WTC11 (cell line): ENCODE measurements at regions of chr3 and their contacts with region 1.

Region 1: GRCh38 chr3:160464321-160464720 is 14.7 kb upstream of the TRIM59 start:
- DNase-seq: no peak
- ATAC-seq: no peak
- H3K4me3 Mint-ChIP-seq: no peak overlapping the region
- H3K27ac Mint-ChIP-seq: no peak overlapping the region
- H3K4me1 Mint-ChIP-seq: peaks cover 5% of the 10 kb centered on the region; the same call in 1 of the 2 replicates
- H3K27me3 Mint-ChIP-seq: peaks cover 36% of the 10 kb centered on the region
- CTCF ChIP-seq: no peak

Region 2: DNA sequence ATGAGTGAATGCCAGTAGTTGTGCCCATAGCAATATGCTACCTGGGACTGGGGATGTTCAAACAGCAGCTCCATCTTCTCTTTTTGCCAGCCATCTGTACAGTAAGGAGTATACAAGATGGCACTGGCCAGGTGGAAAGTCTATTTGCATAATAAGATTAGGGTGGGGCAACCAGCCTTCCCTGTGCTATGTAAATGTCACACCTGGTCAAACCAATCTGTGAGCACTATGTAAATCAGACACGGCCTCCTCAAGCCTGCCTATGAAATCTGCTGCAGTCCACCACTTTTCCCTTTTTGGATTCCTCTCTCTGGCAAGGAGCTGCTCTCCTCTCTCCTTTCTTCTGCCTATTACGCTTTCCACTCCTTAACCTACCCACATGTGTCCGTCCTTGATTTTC is 186.1 kb before region 1 on chr3:
- CTCF ChIA-PET with region 1: no interaction called
- POLR2A ChIA-PET with region 1: no interaction called
- DNase-seq: no peak
- ATAC-seq: peak; percentile 20
- H3K4me3 Mint-ChIP-seq: no peak overlapping the region
- H3K27ac Mint-ChIP-seq: no peak overlapping the region
- H3K4me1 Mint-ChIP-seq: peaks cover 23% of the 10 kb centered on the region
- H3K27me3 Mint-ChIP-seq: no peaks in the 10 kb centered on the region
- CTCF ChIP-seq: no peak

Region 3: GRCh38 chr3:160486459-160486869 is 22.1 kb after region 1 on chr3:
- CTCF ChIA-PET with region 1: interaction called, 4 read pairs
- POLR2A ChIA-PET with region 1: interaction called, 11 read pairs
- DNase-seq: no peak
- ATAC-seq: no peak
- H3K4me3 Mint-ChIP-seq: no peak overlapping the region
- H3K27ac Mint-ChIP-seq: no peak overlapping the region
- H3K4me1 Mint-ChIP-seq: 0 out of 2 replicates have a peak, but pooled peaks cover 6% of the 10 kb centered on the region
- H3K27me3 Mint-ChIP-seq: no peaks in the 10 kb centered on the region
- CTCF ChIP-seq: peak; percentile 46